ENCODE measurements at regions of chr15 and their contacts with region 1.

Region 1: DNA sequence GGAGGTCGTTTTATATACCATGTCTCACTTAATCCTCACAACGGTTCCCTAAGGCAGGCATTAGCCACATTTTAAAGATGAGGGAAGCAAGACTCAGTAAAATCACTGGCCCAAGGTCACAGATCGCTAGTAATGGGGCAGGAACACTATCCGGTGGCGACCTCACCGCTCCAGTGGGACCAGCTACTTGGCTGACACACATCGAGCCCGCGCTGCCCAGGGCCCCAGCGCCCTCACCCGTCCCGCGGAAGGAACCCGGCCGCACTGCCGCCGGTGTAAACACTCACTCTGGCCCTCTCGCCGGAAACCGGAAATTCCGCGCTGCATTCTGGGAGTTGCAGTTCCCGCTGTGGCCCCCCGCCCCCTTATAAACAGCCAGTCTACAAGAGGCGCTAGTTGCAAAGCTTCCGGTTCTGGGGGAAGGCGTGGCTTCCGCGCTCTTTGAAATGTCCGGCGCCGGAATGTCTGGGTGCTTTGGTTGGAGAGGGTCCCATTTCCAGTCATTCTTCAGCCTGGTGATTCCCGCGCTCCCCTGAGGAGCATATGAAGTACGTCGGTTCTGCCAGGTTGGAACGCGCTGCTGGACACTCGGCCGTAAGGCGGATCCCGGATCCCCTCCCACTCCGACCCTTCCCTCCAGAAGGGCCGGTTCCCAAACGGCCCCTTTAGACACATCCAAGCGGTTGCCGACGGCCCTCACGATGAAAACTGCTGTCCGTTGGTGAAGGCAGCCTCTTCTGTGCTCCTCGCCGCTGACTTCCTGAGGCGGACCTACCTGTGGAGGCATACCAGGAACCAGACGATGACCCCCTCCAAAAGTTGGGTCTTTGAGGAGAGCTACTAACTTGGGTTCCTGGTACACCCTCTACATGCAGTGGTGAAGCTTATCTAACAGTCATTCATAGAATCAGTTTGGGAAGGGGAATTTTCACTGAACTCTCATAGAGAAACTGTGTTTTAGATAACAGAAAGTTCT is at the start of gene UBL7:
- DNase-seq: peak; percentile 98
- H3K4me3 ChIP-seq: peak within 1 kb of the TSS; percentile 88
- H3K27ac ChIP-seq: peak within 1 kb of the TSS; percentile 72
- H3K4me1 ChIP-seq: peaks cover 34% of the 10 kb centered on the region
- CTCF ChIP-seq: peak; percentile 60
- total RNA-seq, gene UBL7: 29.5 and 32.6 TPM in 2 replicates

Region 2: GRCh38 chr15:73991726-73992593 is 469.2 kb before region 1 on chr15 and contains the start of gene STOML1:
- CTCF ChIA-PET with region 1: no interaction called
- POLR2A ChIA-PET with region 1: no interaction called
- intact Hi-C with region 1: loop called (anchors 10 kb)
- DNase-seq: peak; percentile 95
- H3K4me3 ChIP-seq: peak within 1 kb of the TSS; percentile 97
- H3K27ac ChIP-seq: no peak within 1 kb of the TSS
- H3K4me1 ChIP-seq: peaks cover 38% of the 10 kb centered on the region
- CTCF ChIP-seq: peak; percentile 85
- total RNA-seq, gene STOML1: 5.7 and 8.0 TPM in 2 replicates

Region 3: GRCh38 chr15:74540761-74541493 is 79.8 kb after region 1 on chr15 and contains the start of gene ARID3B:
- CTCF ChIA-PET with region 1: no interaction called
- POLR2A ChIA-PET with region 1: no interaction called
- intact Hi-C with region 1: loop called (anchors 1 kb)
- DNase-seq: peak; percentile 98
- H3K4me3 ChIP-seq: peak within 1 kb of the TSS; percentile 91
- H3K27ac ChIP-seq: peak within 1 kb of the TSS; percentile 36
- H3K4me1 ChIP-seq: peaks cover 20% of the 10 kb centered on the region
- CTCF ChIP-seq: no peak
- total RNA-seq, gene ARID3B: 0.80 and 7.5 TPM in 2 replicates

Region 4: DNA sequence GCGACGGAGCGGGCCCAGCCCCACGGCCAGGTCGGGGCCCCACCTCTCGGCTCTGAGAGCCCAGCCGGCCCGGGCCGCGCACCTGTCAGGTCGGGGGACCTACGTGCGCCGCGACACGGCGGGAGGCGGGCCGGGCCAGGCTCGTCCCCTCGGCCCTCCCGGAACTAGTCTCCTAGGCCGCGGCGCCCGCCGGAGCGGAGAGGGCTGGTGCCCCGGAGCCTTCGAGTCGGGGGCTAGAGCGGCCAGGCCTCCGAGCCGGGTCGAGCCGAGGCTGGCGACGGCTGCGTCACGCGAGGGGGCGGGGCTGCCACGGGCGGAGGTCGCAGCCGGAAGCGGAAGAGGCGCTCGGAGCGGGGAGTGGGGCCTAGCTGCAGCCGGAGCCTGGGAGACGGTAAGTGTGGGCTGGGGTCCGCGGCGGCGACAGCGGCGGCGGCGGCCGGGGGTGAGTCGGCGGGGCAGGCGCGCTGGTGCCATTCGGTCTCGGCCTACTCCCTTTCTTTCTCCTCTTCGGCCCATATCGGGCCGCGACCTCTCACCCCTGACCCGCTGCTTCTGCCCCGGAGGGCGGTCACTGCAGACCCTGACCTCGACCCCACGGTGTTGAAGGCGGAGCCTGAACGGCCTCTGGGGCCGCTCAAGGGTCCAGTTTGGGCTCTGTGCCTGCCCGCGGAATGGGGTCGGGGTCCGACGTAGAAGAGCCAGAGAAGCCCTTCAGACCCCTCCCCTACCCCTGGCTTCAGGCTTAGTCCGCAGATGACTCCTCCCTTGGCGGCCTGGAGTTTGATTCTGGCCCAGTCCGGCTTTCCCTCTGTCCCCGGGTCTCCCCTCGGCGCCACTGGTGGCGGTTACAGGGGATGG is 154.6 kb after region 1 on chr15 and contains the start of gene CLK3:
- CTCF ChIA-PET with region 1: no interaction called
- POLR2A ChIA-PET with region 1: interaction called, 3 read pairs
- intact Hi-C with region 1: loop called (anchors 2 kb)
- DNase-seq: peak; percentile 97
- H3K4me3 ChIP-seq: peak within 1 kb of the TSS; percentile 96
- H3K27ac ChIP-seq: peak within 1 kb of the TSS; percentile 81
- H3K4me1 ChIP-seq: peaks cover 17% of the 10 kb centered on the region
- CTCF ChIP-seq: no peak
- total RNA-seq, gene CLK3: 85.1 and 86.5 TPM in 2 replicates